ENCODE measurements at regions of chr9 and their contacts with region 1.

Region 1: DNA sequence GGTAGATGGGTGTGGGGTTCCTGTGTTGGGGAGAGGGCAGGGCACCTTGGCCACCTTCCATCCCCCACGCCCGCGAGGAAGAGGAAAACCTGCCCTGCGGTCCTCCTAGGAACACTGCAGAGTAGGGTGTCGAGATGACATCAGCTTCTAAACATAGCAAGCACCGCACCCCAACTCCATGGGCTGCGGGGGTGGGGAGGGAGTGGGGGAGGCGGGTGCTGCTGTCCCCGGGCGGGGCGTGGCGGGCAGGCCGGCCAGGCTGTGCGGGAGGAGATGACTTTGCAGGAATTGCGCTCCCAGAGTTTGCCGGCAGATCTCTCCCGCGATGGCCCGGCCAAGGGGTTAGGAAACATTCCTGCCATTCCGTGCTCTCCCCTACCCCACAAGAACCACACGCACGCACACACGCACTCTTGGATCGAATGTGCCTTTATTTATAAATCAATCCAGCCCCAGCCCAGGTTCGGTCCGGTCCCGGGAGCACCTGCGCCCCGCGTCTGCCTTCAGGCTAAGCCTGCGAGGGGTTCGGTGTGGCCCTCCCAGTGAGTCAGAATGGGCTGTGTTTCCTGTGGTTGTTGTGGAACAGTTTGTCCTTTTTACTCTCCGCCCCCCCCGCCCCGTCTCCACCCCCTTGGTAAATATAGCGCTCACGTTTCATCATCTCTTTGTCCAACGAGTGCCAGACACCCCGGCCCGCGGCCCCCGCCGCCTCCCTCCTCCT is 5.2 kb upstream of the KLF9 start:
- DNase-seq: peak; percentile 98
- H3K4me3 Mint-ChIP-seq: peak overlapping the region; percentile 75
- H3K27ac Mint-ChIP-seq: peak overlapping the region; percentile 99
- H3K4me1 Mint-ChIP-seq: peaks cover 25% of the 10 kb centered on the region
- H3K27me3 Mint-ChIP-seq: no peaks in the 10 kb centered on the region
- CTCF ChIP-seq: no peak

Region 2: DNA sequence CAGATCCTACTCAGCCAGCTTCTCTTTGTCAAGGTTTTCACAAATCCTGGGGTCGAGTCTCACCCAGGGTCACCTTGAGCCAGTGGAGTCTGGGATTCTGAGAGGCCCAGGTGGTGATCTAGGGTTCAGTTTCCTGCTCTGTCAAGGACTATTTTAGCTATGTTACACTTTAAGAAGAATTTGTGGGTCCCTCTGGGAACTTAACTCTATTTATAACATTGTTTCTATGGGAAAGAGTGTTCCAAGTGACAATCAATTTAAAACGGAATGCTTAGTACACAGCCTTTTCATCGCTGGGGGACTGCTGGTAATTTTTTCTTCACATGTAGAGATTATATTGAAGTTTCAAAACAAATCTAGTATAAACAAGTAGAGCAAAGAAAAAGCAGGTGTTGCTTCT is 1852.1 kb before region 1 on chr9:
- CTCF ChIA-PET with region 1: no interaction called
- POLR2A ChIA-PET with region 1: no interaction called
- intact Hi-C with region 1: no loop called
- DNase-seq: no peak
- H3K4me3 Mint-ChIP-seq: no peak overlapping the region
- H3K27ac Mint-ChIP-seq: no peak overlapping the region
- H3K4me1 Mint-ChIP-seq: no peaks in the 10 kb centered on the region
- H3K27me3 Mint-ChIP-seq: peaks cover 30% of the 10 kb centered on the region
- CTCF ChIP-seq: no peak

Region 3: GRCh38 chr9:70438341-70438928 is 18.7 kb after region 1 on chr9:
- CTCF ChIA-PET with region 1: interaction called, 3 read pairs
- POLR2A ChIA-PET with region 1: interaction called, 16 read pairs
- intact Hi-C with region 1: loop called (anchors 2 kb)
- DNase-seq: peak; percentile 92
- H3K4me3 Mint-ChIP-seq: no peak overlapping the region
- H3K27ac Mint-ChIP-seq: peak overlapping the region; percentile 80
- H3K4me1 Mint-ChIP-seq: peaks cover 23% of the 10 kb centered on the region
- H3K27me3 Mint-ChIP-seq: no peaks in the 10 kb centered on the region
- CTCF ChIP-seq: no peak

Region 4: GRCh38 chr9:70510157-70510770 is 90.6 kb after region 1 on chr9:
- CTCF ChIA-PET with region 1: interaction called, 5 read pairs
- POLR2A ChIA-PET with region 1: interaction called, 16 read pairs
- intact Hi-C with region 1: no loop called
- DNase-seq: peak; percentile 39
- H3K4me3 Mint-ChIP-seq: no peak overlapping the region
- H3K27ac Mint-ChIP-seq: no peak overlapping the region
- H3K4me1 Mint-ChIP-seq: no peaks in the 10 kb centered on the region
- H3K27me3 Mint-ChIP-seq: no peaks in the 10 kb centered on the region
- CTCF ChIP-seq: peak; percentile 50

Measured in MCF 10A (cell line).